H1 (cell line): ENCODE measurements at regions of chr6 and their contacts with region 1.

Region 1: DNA sequence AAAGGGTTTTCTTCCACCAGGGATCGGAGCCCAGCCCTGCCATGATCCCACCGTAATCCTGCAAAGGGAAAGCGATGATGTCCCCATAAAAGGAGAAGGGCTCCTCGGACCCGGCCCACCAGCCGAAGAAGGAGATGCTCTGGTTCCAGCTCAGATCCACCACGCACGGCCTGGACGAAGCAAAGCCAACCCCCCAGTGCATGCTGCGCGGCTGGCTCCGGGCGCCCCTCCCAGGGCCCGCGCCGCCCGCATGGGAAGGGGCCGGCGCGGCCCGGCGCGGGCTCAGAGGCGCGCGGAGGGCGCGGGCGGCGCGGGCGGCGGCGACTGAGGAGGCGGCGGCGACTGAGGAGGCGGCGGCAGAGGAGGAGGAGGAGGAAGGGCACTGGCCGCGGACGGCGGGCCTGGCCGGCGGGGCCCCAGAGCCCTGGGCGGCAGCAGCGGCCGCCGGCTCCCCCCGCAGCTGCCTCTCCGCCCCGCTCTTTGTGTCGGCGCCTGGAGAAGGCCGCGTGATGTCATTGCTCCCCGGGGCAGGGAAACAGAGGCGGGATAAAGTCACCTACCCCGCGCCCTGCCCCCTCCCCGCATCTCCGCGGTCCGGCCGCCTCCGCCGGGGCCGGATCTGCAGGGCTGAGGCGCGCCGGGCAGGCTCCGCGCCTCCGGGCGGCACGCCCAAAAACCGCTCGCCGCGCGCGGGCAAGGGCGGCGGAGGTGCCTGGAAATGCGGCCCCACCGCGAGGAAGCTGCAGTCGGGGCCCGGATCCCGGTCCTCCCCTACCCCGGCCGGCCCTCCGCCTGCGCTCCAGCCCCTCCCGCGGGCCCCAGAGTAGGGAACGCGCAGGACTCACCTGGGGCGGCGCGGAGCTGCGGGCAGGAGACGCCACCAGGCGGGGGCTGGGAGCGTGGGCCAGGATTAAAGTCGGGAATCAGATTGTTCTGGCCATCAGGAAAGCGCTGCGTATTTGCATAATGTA is at the start of gene FAXC:
- DNase-seq: peak in 1 of 2 experiments; percentile 81
- H3K4me3 ChIP-seq: peak within 1 kb of the TSS; percentile 86 to 96 (median 90)
- H3K27ac ChIP-seq: peak within 1 kb of the TSS; percentile 62; the same call in 1 of the 2 replicates
- H3K4me1 ChIP-seq: peaks cover 0 to 9% (median 6%) of the 10 kb centered on the region in 4 experiments; a peak in 6 of 7 replicates
- H3K27me3 ChIP-seq: no peaks in the 10 kb centered on the region; a peak in 1 of 7 replicates
- CTCF ChIP-seq: peak; percentile 31 to 45 (median 35)
- EP300 ChIP-seq: no peak
- POLR2A ChIP-seq: peak; percentile 72 to 73
- RAD21 ChIP-seq: peak; percentile 36 to 47; a peak in 2 of 4 replicates
- total RNA-seq, gene FAXC: 25.6 and 29.8 TPM in 2 replicates

Region 2: GRCh38 chr6:99338188-99338587 is 11.3 kb before region 1 on chr6:
- CTCF ChIA-PET with region 1: interaction called, 23 read pairs
- POLR2A ChIA-PET with region 1: interaction called, 34 read pairs
- DNase-seq: no peak
- H3K4me3 ChIP-seq: no peak overlapping the region
- H3K27ac ChIP-seq: no peak overlapping the region
- H3K4me1 ChIP-seq: peaks cover 0 to 6% (median 2%) of the 10 kb centered on the region in 4 experiments; a peak in 3 of 7 replicates
- H3K27me3 ChIP-seq: no peaks in the 10 kb centered on the region
- CTCF ChIP-seq: no peak
- EP300 ChIP-seq: no peak
- POLR2A ChIP-seq: no peak
- RAD21 ChIP-seq: no peak

Region 3: DNA sequence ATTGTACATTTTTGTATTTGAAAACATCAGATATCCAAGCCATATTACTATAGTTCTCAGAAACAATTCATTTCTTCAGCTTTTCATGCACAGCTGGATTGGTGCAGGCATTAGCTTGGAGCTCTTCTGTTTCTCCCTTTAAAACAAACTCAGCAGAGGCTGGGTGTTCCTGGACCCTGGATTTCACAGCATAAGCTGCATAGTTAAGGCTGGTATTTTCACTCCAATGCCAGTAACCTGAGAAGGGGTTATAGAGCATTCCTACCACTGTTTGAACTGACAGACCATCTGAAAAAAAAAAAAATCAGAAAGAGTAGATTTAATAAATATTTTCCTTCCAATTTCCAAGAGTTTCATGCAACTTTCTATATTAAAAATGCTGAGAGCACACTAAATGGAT is 20.1 kb after region 1 on chr6:
- CTCF ChIA-PET with region 1: interaction called, 16 read pairs
- POLR2A ChIA-PET with region 1: interaction called, 11 read pairs
- DNase-seq: no peak
- H3K4me3 ChIP-seq: no peak overlapping the region
- H3K27ac ChIP-seq: no peak overlapping the region
- H3K4me1 ChIP-seq: peaks cover 0 to 3% (median 0%) of the 10 kb centered on the region in 4 experiments; a peak in 2 of 7 replicates
- H3K27me3 ChIP-seq: no peaks in the 10 kb centered on the region
- CTCF ChIP-seq: no peak
- EP300 ChIP-seq: no peak
- POLR2A ChIP-seq: no peak
- RAD21 ChIP-seq: no peak

Region 4: GRCh38 chr6:99425647-99426453 is 76.4 kb after region 1 on chr6:
- CTCF ChIA-PET with region 1: interaction called, 5 read pairs
- POLR2A ChIA-PET with region 1: interaction called, 12 read pairs
- DNase-seq: peak; percentile 87 to 90
- H3K4me3 ChIP-seq: peak overlapping the region; percentile 79 to 99 (median 92)
- H3K27ac ChIP-seq: peak overlapping the region; percentile 97
- H3K4me1 ChIP-seq: peaks cover 0 to 11% (median 5%) of the 10 kb centered on the region in 4 experiments; a peak in 4 of 7 replicates
- H3K27me3 ChIP-seq: no peaks in the 10 kb centered on the region
- CTCF ChIP-seq: peak; percentile 37 to 63 (median 44); a peak in 3 of 4 replicates
- EP300 ChIP-seq: peak in 1 of 2 experiments; percentile 85; a peak in 1 of 3 replicates
- POLR2A ChIP-seq: peak in 1 of 2 experiments; percentile 79; a peak in 2 of 3 replicates
- RAD21 ChIP-seq: peak; percentile 34 to 42